ENCODE measurements at regions of chr2 and their contacts with region 1.

Region 1: GRCh38 chr2:178761759-178762371 is 45.4 kb downstream of the TTN start:
- DNase-seq: no peak
- H3K4me3 Mint-ChIP-seq: no peak overlapping the region
- H3K27ac Mint-ChIP-seq: no peak overlapping the region
- H3K4me1 Mint-ChIP-seq: no peaks in the 10 kb centered on the region
- H3K27me3 Mint-ChIP-seq: peaks cover 2% of the 10 kb centered on the region

Region 2: GRCh38 chr2:178891265-178891958 is 129.5 kb after region 1 on chr2:
- intact Hi-C with region 1: loop called (anchors 1 kb)
- DNase-seq: peak; percentile 45
- H3K4me3 Mint-ChIP-seq: no peak overlapping the region
- H3K27ac Mint-ChIP-seq: no peak overlapping the region
- H3K4me1 Mint-ChIP-seq: no peaks in the 10 kb centered on the region
- H3K27me3 Mint-ChIP-seq: peaks cover 2% of the 10 kb centered on the region

Region 3: GRCh38 chr2:178914259-178914849 is 152.5 kb after region 1 on chr2:
- intact Hi-C with region 1: loop called (anchors 1 kb)
- DNase-seq: peak; percentile 54
- H3K4me3 Mint-ChIP-seq: no peak overlapping the region
- H3K27ac Mint-ChIP-seq: no peak overlapping the region
- H3K4me1 Mint-ChIP-seq: no peaks in the 10 kb centered on the region
- H3K27me3 Mint-ChIP-seq: no peaks in the 10 kb centered on the region

Region 4: GRCh38 chr2:179020156-179020750 is 258.4 kb after region 1 on chr2:
- intact Hi-C with region 1: loop called (anchors 10 kb)
- DNase-seq: peak; percentile 13
- H3K4me3 Mint-ChIP-seq: no peak overlapping the region
- H3K27ac Mint-ChIP-seq: no peak overlapping the region
- H3K4me1 Mint-ChIP-seq: peaks cover 22% of the 10 kb centered on the region
- H3K27me3 Mint-ChIP-seq: no peaks in the 10 kb centered on the region

Region 5: GRCh38 chr2:179129574-179130238 is 367.8 kb after region 1 on chr2:
- intact Hi-C with region 1: loop called (anchors 1 kb)
- DNase-seq: no peak
- H3K4me3 Mint-ChIP-seq: no peak overlapping the region
- H3K27ac Mint-ChIP-seq: no peak overlapping the region
- H3K4me1 Mint-ChIP-seq: no peaks in the 10 kb centered on the region
- H3K27me3 Mint-ChIP-seq: no peaks in the 10 kb centered on the region